ENCODE measurements at regions of chr6 and their contacts with region 1.

Region 1: GRCh38 chr6:108526739-108527174 is 34.0 kb upstream of the FOXO3 start:
- DNase-seq: peak in 3 of 6 donors; percentile 21 to 48 (median 22)
- ATAC-seq: peak in 3 of 4 donors; percentile 82 to 86 (median 83)
- H3K4me3 ChIP-seq: no peak overlapping the region
- H3K27ac ChIP-seq: no peak overlapping the region
- H3K4me1 ChIP-seq: no peaks in the 10 kb centered on the region
- H3K27me3 ChIP-seq: no peaks in the 10 kb centered on the region
- CTCF ChIP-seq: peak; percentile 53 to 83 (median 78)

Region 2: DNA sequence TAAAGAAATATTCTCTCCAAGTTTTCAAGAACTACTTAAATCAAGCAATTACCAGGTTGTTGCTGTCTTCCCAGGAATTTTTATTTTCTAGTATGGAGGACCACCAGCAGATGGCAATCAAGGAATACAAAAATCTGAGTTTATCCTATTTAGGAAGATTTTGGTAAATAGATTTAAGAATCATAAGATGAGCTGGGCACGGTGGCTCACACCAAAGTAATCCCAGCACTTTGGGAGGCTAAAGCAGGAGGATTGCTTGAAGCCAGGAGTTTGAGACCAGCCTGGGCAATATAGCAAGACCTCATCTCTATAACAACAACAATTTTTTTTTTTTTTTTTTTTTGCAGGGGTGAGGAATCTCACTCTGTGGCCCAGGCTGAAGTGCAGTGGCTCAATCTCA is 549.5 kb before region 1 on chr6:
- intact Hi-C with region 1: loop called in 1 of 3 experiments (anchors 10 kb)
- DNase-seq: no peak
- ATAC-seq: peak in 3 of 4 donors; percentile 47 to 48 (median 47)
- H3K4me3 ChIP-seq: no peak overlapping the region
- H3K27ac ChIP-seq: no peak overlapping the region
- H3K4me1 ChIP-seq: peaks cover 0 to 4% (median 0%) of the 10 kb centered on the region in 3 donors
- H3K27me3 ChIP-seq: no peaks in the 10 kb centered on the region
- CTCF ChIP-seq: peak in 2 of 4 donors; percentile 17 to 24

Region 3: DNA sequence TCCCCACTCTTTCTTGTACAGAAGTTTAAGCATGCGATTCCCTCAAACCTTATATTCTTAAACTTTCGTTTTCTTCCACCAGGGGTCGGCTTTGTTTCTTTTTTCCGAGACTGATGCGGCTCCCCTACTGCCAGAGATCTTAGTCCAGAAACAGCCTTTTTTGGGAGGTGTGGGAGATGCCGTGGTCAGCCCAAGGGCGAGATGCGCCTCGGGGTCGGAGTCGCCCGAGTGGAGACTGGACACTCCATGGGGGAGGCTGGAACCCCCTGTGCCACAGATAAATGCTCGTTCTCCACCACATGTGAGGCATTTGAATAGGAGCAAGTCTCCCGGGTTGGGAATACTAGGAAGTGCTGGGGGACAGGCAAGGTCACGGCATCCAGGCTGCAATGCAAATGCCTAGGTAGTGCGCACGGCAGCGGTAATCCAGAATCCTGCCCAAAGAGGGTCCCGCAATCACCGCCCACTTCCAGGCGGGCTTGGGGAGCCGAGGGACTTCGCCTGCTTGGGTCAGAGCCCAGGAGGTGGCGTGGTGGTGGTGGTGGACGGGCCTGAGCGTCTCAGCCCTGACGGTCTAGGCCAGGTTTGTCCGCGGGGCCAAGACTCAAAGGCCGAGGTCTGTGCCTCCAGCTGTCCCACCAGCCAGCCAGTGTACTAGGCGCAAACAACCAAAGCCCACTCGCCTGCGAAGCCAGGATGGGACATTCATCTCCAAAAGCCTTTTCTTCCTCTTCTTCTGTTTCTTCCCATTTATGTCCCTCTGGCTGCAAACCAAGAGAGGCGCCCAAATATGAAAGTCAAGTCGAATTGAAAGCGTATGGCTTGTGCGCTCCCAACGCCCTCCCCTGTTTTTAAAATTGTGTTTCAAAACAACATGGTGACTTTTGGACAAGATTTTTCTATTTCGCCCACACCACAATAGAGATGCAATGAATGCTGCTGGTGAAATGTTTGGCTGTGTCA is 412.9 kb before region 1 on chr6:
- intact Hi-C with region 1: loop called in 1 of 3 experiments (anchors 5 kb)
- DNase-seq: peak in 5 of 6 donors; percentile 30 to 69 (median 47)
- ATAC-seq: peak; percentile 36 to 61 (median 52)
- H3K4me3 ChIP-seq: peak overlapping the region in 1 of 4 donors; percentile 45
- H3K27ac ChIP-seq: no peak overlapping the region
- H3K4me1 ChIP-seq: peaks cover 0 to 22% (median 0%) of the 10 kb centered on the region in 3 donors
- H3K27me3 ChIP-seq: peaks cover 0 to 9% (median 4%) of the 10 kb centered on the region in 4 donors
- CTCF ChIP-seq: peak in 3 of 4 donors; percentile 26 to 40 (median 40)

Region 4: GRCh38 chr6:108123946-108124345 is 402.8 kb before region 1 on chr6:
- intact Hi-C with region 1: loop called in 1 of 3 experiments (anchors 5 kb)
- DNase-seq: no peak
- ATAC-seq: no peak
- H3K4me3 ChIP-seq: no peak overlapping the region
- H3K27ac ChIP-seq: no peak overlapping the region
- H3K4me1 ChIP-seq: peaks cover 0 to 9% (median 4%) of the 10 kb centered on the region in 3 donors
- H3K27me3 ChIP-seq: no peaks in the 10 kb centered on the region
- CTCF ChIP-seq: no peak

Region 5: GRCh38 chr6:109059571-109060021 is 532.8 kb after region 1 on chr6:
- intact Hi-C with region 1: loop called in 1 of 3 experiments (anchors 10 kb)
- DNase-seq: no peak
- ATAC-seq: peak; percentile 69 to 85 (median 80)
- H3K4me3 ChIP-seq: no peak overlapping the region
- H3K27ac ChIP-seq: peak overlapping the region; percentile 4 to 76 (median 58)
- H3K4me1 ChIP-seq: peaks cover 18 to 38% (median 22%) of the 10 kb centered on the region in 3 donors
- H3K27me3 ChIP-seq: no peaks in the 10 kb centered on the region
- CTCF ChIP-seq: peak in 1 of 4 donors; percentile 11